HepG2 (cell line): ENCODE measurements at regions of chr2 and their contacts with region 1.

Region 1: DNA sequence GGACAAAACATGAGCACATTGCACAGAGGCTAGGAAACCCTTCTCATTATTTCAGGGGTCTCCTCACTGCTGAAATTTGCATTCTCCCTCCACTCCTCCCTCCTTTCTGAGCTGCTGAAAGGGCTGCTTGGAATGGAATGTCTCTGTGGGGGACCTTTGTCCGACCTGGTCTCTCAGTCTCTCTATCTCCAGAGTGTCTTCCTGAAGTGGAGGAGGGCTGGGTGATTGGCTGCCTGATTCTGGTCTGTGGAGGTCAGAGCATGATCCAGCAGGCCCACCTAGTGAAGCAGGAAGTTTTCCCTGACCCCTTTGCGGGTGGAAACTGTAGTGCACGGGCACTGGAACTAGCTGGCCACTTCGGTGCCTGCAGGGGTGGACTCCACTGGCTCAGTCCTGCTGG is 560.5 kb upstream of the HS6ST1 start:
- DNase-seq: no peak
- ATAC-seq: no peak
- H3K4me3 ChIP-seq: no peak overlapping the region
- H3K27ac ChIP-seq: no peak overlapping the region
- H3K4me1 ChIP-seq: no peaks in the 10 kb centered on the region
- H3K27me3 ChIP-seq: peaks cover 0 to 15% of the 10 kb centered on the region in 2 experiments; a peak in 2 of 5 replicates
- CTCF ChIP-seq: no peak
- EP300 ChIP-seq: no peak
- POLR2A ChIP-seq: no peak
- RAD21 ChIP-seq: no peak

Region 2: GRCh38 chr2:128903637-128904036 is 24.5 kb after region 1 on chr2:
- CTCF ChIA-PET with region 1: no interaction called
- POLR2A ChIA-PET with region 1: no interaction called
- in situ Hi-C with region 1: no loop called
- intact Hi-C with region 1: loop called (anchors 2 kb)
- DNase-seq: no peak
- ATAC-seq: no peak
- H3K4me3 ChIP-seq: no peak overlapping the region
- H3K27ac ChIP-seq: no peak overlapping the region
- H3K4me1 ChIP-seq: no peaks in the 10 kb centered on the region
- H3K27me3 ChIP-seq: peaks cover 0 to 11% of the 10 kb centered on the region in 2 experiments; a peak in 2 of 5 replicates
- CTCF ChIP-seq: no peak
- EP300 ChIP-seq: no peak
- POLR2A ChIP-seq: no peak
- RAD21 ChIP-seq: no peak

Region 3: GRCh38 chr2:128986026-128986715 is 107.0 kb after region 1 on chr2:
- CTCF ChIA-PET with region 1: no interaction called
- POLR2A ChIA-PET with region 1: no interaction called
- in situ Hi-C with region 1: no loop called
- intact Hi-C with region 1: no loop called
- DNase-seq: no peak
- ATAC-seq: no peak
- H3K4me3 ChIP-seq: no peak overlapping the region
- H3K27ac ChIP-seq: no peak overlapping the region
- H3K4me1 ChIP-seq: no peaks in the 10 kb centered on the region
- H3K27me3 ChIP-seq: peaks cover 0 to 35% of the 10 kb centered on the region in 2 experiments; a peak in 1 of 5 replicates
- CTCF ChIP-seq: no peak
- EP300 ChIP-seq: no peak
- POLR2A ChIP-seq: no peak
- RAD21 ChIP-seq: no peak